ENCODE measurements at regions of chr19 and their contacts with region 1.

Region 1: DNA sequence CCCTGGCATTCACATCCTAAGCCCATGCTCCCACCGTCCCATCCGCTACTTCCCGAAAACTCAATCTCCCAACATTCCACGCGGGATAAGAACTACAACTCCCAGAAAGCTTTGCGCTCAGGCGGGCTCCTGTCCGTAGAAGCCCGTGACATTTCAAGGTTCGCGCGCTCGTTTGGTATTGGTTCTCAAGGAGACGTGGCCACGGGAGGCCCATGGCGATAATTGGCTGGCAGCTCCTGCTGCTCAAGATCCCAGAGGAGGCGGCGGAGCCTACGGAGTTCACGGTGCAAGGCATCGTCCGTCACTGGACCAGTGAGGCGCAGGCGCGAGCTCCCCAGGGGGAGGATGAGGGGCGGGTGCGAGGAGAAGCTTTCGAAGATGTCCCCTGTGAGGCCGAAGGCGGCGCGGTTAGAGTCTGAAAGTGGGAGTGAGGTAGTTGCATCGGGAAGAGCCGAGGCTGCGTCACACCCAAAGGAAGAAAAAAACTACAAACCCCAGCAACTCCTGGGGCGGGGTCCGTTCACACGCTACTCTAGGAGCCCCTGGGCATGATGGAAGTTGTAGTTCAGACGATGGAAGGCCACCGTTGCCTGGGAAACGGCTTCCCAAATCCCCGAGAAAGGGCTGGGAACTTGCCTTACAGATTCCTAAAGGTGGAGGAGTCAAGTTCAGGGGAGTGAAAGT is 1.2 kb upstream of the MAMSTR start:
- DNase-seq: peak; percentile 91

Region 2: GRCh38 chr19:48738557-48739399 is 18.0 kb after region 1 on chr19:
- CTCF ChIA-PET with region 1: interaction called, 3 read pairs
- POLR2A ChIA-PET with region 1: interaction called, 17 read pairs
- DNase-seq: peak; percentile 98

Measured in HEK293T (cell line).